ENCODE measurements at regions of chr16 and their contacts with region 1.

Region 1: GRCh38 chr16:53743149-53743566 is 39.2 kb downstream of the FTO start:
- DNase-seq: peak; percentile 23
- H3K4me3 Mint-ChIP-seq: no peak overlapping the region
- H3K27ac Mint-ChIP-seq: no peak overlapping the region
- H3K4me1 Mint-ChIP-seq: peaks cover 28% of the 10 kb centered on the region
- H3K27me3 Mint-ChIP-seq: no peaks in the 10 kb centered on the region

Region 2: DNA sequence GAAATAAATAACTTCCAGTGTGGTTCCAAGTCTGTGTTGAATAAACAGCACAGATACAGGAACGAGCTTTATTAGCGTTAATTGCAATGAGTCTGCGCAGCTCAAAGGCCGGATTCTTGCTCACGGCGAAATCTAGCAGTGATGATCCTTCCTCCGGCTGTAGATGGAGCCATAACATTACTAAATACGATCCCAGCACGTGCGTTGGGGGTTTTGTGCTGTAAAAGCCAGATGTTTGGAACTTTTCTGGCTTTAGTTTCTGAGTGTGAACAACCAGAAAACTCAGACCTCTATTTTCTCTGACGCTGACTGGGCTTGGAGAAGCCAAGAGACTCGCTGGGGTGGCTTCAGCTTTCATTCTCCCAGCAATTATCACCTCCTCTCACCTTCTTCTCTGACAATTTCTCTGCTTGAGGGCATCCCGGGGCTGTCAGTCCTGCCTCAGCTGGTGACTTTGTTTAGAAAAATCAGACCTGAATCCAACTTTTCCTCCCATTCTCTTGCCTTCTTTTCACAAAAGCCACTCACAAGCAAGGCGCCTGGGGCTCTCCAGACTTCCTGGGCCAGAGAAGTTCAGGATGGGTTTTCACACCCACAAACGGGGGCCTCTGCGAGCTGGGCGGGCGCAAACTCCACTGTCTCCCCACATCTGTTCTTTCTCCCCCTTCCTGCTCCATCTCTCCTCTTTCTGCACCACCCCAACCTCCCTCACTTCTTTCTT is 193.0 kb before region 1 on chr16:
- CTCF ChIA-PET with region 1: interaction called, 17 read pairs
- POLR2A ChIA-PET with region 1: no interaction called
- DNase-seq: peak; percentile 60
- H3K4me3 Mint-ChIP-seq: no peak overlapping the region
- H3K27ac Mint-ChIP-seq: no peak overlapping the region
- H3K4me1 Mint-ChIP-seq: peaks cover 26% of the 10 kb centered on the region
- H3K27me3 Mint-ChIP-seq: peaks cover 8% of the 10 kb centered on the region

Region 3: GRCh38 chr16:53703590-53704444 is 39.3 kb before region 1 on chr16 and contains the starts of genes FTO and RPGRIP1L:
- CTCF ChIA-PET with region 1: interaction called, 16 read pairs
- POLR2A ChIA-PET with region 1: no interaction called
- DNase-seq: peak; percentile 98
- H3K4me3 Mint-ChIP-seq: peak within 1 kb of the TSS; percentile 99
- H3K27ac Mint-ChIP-seq: peak within 1 kb of the TSS; percentile 86
- H3K4me1 Mint-ChIP-seq: peaks cover 28% of the 10 kb centered on the region
- H3K27me3 Mint-ChIP-seq: no peaks in the 10 kb centered on the region
- total RNA-seq, gene FTO: 48.1 to 48.5 TPM
- total RNA-seq, gene RPGRIP1L: 4.5 to 5.1 TPM

Region 4: GRCh38 chr16:53755536-53755910 is 12.4 kb after region 1 on chr16:
- CTCF ChIA-PET with region 1: interaction called, 15 read pairs
- POLR2A ChIA-PET with region 1: no interaction called
- DNase-seq: no peak
- H3K4me3 Mint-ChIP-seq: no peak overlapping the region
- H3K27ac Mint-ChIP-seq: no peak overlapping the region
- H3K4me1 Mint-ChIP-seq: no peaks in the 10 kb centered on the region
- H3K27me3 Mint-ChIP-seq: no peaks in the 10 kb centered on the region

Region 5: DNA sequence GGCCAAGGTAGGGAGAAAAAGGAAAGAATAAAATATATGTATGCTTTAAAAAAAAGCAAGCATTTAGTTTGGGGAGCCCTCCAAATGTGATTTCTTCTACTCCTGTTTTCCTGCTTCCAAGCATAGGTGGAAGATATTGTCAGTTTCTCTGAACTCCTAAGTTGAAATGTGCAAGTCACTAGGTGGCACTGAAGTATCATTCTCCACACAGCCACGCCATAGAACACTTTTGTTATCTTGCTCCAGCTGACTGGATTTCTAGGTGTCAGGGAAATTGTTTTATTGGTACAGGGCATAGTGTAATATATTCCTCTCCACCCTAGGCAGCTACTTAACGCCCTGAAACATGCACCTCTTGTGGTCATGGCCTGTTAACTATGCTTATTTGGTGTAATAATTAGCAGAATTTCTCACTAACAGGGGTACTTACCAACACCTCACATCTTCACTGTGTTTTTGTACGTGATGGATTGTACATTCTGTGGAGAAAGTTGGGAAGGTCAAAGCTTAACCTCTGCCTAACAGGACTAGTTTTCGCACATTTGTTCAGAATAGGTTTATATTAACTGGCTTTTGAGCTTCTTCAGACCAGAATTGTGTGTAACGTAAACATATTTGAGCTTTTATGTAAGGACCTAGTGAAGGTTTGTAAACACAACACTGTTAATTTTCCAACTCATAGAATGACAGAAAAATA is 30.1 kb after region 1 on chr16:
- CTCF ChIA-PET with region 1: interaction called, 15 read pairs
- POLR2A ChIA-PET with region 1: no interaction called
- DNase-seq: peak; percentile 19
- H3K4me3 Mint-ChIP-seq: no peak overlapping the region
- H3K27ac Mint-ChIP-seq: no peak overlapping the region
- H3K4me1 Mint-ChIP-seq: peaks cover 25% of the 10 kb centered on the region
- H3K27me3 Mint-ChIP-seq: no peaks in the 10 kb centered on the region

Region 6: DNA sequence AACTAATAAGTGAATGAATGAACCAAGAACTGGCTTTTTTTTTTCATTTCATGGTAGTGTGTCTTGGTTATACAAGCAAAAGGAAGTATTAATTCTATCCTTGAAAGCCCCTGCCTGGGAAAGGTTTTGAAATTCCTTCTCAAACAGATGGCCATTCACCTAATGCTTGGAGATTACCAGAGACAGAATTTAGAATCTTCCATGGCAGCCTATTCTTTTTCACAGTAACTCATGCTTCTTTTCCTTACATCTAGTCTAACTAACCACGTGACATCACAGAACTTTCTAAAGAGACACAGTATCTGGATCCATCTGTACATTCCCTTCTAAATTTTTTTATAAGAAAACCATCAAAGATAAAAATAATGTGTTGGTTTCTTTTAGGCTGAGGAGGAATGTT is 112.4 kb after region 1 on chr16:
- CTCF ChIA-PET with region 1: no interaction called
- POLR2A ChIA-PET with region 1: no interaction called
- DNase-seq: no peak
- H3K4me3 Mint-ChIP-seq: no peak overlapping the region
- H3K27ac Mint-ChIP-seq: no peak overlapping the region
- H3K4me1 Mint-ChIP-seq: no peaks in the 10 kb centered on the region
- H3K27me3 Mint-ChIP-seq: no peaks in the 10 kb centered on the region

Measured in activated CD4-positive, alpha-beta memory T cell treated with anti-CD3 and anti-CD28 coated beads, Interleukin-2, amount 10 ng/mL, durations not matched to agents 7 days and 5 days (primary cell).